Activated naive CD8-positive, alpha-beta T cell treated with anti-CD3 and anti-CD28 coated beads, Interleukin-2, amount 10 ng/mL, durations not matched to agents 7 days and 5 days (primary cell): ENCODE measurements at regions of chr11 and their contacts with region 1.

Region 1: DNA sequence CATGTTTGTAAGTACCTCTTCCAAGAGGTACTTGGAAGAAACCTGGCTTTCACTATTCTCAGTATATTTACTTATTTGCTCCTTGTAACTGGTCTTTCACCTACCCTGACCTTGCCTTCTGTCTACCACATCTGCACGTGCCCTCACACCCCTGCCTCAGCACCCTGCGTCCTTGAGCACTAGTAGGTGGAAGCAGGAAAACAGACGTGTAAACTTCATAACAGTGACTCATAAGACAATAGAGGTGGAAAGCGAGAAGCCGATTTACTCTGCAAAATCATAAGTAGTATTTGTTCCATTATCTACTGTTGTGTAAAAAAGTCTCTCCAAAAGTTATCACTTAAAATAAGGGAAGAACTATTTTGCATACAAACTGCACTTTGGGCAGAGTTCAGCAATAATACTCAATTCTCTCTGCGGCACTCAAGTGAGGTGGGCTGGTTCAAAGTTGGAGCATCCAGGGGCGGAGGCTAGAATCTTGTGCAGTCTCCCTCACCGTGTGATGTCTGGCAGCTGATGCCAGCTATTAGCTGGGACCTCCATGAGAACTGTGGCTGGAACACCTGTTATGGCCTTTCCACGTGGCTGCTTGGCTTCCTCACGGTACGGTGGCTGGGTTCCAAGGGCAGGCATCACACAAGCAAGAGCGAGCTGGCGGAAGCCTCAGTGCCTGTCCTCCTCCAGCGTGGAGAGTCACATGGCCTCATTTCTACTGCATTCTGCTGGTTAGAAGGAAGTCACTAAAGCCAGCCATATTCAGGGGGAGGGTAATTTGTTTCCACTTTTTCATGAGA is 30.4 kb downstream of the PACS1 start:
- DNase-seq: peak; percentile 71
- ATAC-seq: peak; percentile 97
- H3K4me3 Mint-ChIP-seq: peak overlapping the region; percentile 76
- H3K27ac Mint-ChIP-seq: peak overlapping the region; percentile 86
- H3K4me1 Mint-ChIP-seq: peaks cover 41% of the 10 kb centered on the region
- H3K27me3 Mint-ChIP-seq: no peaks in the 10 kb centered on the region

Region 2: GRCh38 chr11:66063900-66064299 is 36.6 kb before region 1 on chr11:
- POLR2A ChIA-PET with region 1: no interaction called
- DNase-seq: no peak
- ATAC-seq: no peak
- H3K4me3 Mint-ChIP-seq: no peak overlapping the region
- H3K27ac Mint-ChIP-seq: peak overlapping the region; percentile 17
- H3K4me1 Mint-ChIP-seq: peaks cover 42% of the 10 kb centered on the region
- H3K27me3 Mint-ChIP-seq: no peaks in the 10 kb centered on the region

Region 3: GRCh38 chr11:66081505-66081904 is 19.0 kb before region 1 on chr11:
- POLR2A ChIA-PET with region 1: interaction called, 17 read pairs
- DNase-seq: peak; percentile 63
- ATAC-seq: peak; percentile 97
- H3K4me3 Mint-ChIP-seq: peak overlapping the region; percentile 91
- H3K27ac Mint-ChIP-seq: peak overlapping the region; percentile 99
- H3K4me1 Mint-ChIP-seq: peaks cover 57% of the 10 kb centered on the region
- H3K27me3 Mint-ChIP-seq: no peaks in the 10 kb centered on the region

Region 4: GRCh38 chr11:66142370-66143263 is 42.1 kb after region 1 on chr11:
- POLR2A ChIA-PET with region 1: no interaction called
- DNase-seq: no peak
- ATAC-seq: no peak
- H3K4me3 Mint-ChIP-seq: no peak overlapping the region
- H3K27ac Mint-ChIP-seq: no peak overlapping the region
- H3K4me1 Mint-ChIP-seq: peaks cover 25% of the 10 kb centered on the region
- H3K27me3 Mint-ChIP-seq: no peaks in the 10 kb centered on the region

Region 5: DNA sequence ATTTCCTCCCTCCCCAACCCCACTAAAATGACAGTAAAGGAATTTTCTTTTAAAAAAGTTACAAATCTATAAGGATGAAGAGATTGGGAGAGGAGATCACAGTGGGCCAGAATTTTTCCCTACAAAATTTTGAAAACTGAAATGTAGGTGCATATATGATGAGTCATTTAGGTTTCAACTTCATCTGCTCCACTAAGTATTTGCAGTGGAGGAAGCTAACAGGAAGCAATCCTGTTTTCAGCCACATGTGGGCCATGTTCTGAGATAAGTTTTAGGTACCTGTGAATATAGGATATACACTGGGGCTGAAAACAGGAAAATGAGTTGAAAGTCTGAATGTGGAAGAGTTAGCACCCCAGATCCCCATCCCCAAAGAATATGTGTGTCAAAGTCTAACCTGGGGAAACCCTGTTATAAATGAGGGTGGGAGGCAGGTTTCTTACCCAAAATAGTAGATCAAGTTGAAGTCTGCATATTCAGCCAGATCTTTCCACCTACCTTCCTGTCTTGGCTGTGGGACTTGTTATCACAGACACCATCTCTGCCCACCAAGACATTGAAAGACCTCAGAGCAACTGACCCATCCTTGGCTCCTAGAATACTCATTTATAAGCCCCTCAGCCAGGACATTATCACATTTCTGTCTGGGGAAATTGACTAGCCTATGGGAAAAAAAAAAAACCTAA is 56.9 kb after region 1 on chr11:
- POLR2A ChIA-PET with region 1: no interaction called
- DNase-seq: no peak
- ATAC-seq: no peak
- H3K4me3 Mint-ChIP-seq: no peak overlapping the region
- H3K27ac Mint-ChIP-seq: peak overlapping the region; percentile 4
- H3K4me1 Mint-ChIP-seq: peaks cover 17% of the 10 kb centered on the region
- H3K27me3 Mint-ChIP-seq: no peaks in the 10 kb centered on the region